Prostate gland (tissue), 2 donors: ENCODE measurements at regions of chr18 and their contacts with region 1.

Region 1: DNA sequence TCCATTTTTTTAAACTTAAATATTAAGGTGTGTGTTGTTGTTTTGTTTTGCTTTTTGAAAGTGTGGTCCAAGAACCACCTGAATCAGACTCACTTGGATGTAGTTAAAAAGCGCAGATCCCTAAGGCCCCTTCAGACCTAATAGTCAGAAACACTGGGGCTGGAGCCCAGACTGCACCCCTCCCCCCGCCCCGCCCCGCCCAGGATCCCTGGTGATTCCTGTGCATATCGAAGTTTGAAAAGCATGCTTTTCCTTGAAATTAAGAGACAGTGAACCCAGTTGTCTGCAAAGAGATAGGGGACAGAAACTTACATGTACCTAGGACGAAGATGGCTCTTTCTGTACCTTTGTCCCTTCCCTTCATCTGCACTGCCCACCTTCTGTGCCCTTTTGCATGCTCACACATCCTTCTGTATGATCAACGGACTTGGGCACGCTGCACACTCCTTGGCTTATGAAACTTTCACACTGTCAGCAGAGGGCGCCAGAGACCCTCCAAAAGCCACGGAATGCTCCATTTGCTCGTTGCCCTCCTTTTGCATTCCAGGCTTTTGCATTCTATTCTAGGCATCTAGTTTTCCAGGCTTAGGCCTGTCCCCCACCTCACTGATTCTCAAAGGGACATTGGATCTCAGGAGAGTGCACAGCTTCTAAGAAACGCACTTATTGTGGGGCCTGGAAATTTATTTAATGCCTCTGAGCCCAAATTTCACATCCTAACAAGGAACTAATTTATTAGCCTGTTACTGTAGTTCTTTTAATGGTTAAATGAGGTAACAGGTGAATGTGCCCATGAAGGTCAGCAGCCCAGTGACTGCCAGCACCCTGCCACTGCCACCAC is 32.8 kb upstream of the SLC14A1 start:
- DNase-seq: peak; percentile 78
- H3K4me3 ChIP-seq: no peak overlapping the region
- H3K27ac ChIP-seq: no peak overlapping the region
- H3K4me1 ChIP-seq: no peaks in the 10 kb centered on the region
- H3K27me3 ChIP-seq: no peaks in the 10 kb centered on the region
- CTCF ChIP-seq: peak; percentile 45 to 91 (median 84)
- POLR2A ChIP-seq: no peak

Region 2: GRCh38 chr18:45291621-45292615 is 399.3 kb before region 1 on chr18:
- intact Hi-C with region 1: no loop called
- DNase-seq: no peak
- H3K4me3 ChIP-seq: no peak overlapping the region
- H3K27ac ChIP-seq: no peak overlapping the region
- H3K4me1 ChIP-seq: no peaks in the 10 kb centered on the region
- H3K27me3 ChIP-seq: no peaks in the 10 kb centered on the region
- CTCF ChIP-seq: no peak
- POLR2A ChIP-seq: no peak

Region 3: GRCh38 chr18:45488645-45489044 is 202.6 kb before region 1 on chr18:
- intact Hi-C with region 1: no loop called
- DNase-seq: no peak
- H3K4me3 ChIP-seq: no peak overlapping the region
- H3K27ac ChIP-seq: no peak overlapping the region
- H3K4me1 ChIP-seq: no peaks in the 10 kb centered on the region
- H3K27me3 ChIP-seq: no peaks in the 10 kb centered on the region
- CTCF ChIP-seq: no peak
- POLR2A ChIP-seq: no peak

Region 4: DNA sequence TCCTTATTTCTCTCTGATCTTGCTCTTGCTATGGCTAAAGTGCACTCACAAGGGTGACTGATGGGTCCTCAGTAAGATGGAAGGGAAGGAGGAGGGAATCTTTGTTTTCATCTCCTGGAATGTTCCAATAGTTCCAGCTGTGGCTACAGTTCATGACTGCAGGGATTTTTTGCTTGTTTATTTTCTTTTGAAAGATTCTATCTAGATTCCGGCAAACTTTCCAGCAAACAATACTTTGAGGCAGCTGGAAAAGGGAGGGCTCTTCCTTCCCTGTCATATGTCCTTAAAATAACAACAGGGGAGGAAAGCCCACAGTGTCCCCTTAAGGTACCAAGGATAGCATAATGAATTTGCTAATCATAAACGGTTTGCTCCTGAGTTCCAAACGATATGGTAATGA is 187.2 kb before region 1 on chr18:
- intact Hi-C with region 1: no loop called
- DNase-seq: no peak
- H3K4me3 ChIP-seq: no peak overlapping the region
- H3K27ac ChIP-seq: peak overlapping the region in 1 of 2 donors; percentile 19
- H3K4me1 ChIP-seq: no peaks in the 10 kb centered on the region
- H3K27me3 ChIP-seq: no peaks in the 10 kb centered on the region
- CTCF ChIP-seq: no peak
- POLR2A ChIP-seq: no peak

Region 5: GRCh38 chr18:45879681-45880655 is 188.8 kb after region 1 on chr18:
- intact Hi-C with region 1: loop called (anchors 5 kb)
- DNase-seq: peak; percentile 73
- H3K4me3 ChIP-seq: no peak overlapping the region
- H3K27ac ChIP-seq: peak overlapping the region; percentile 11 to 20
- H3K4me1 ChIP-seq: no peaks in the 10 kb centered on the region
- H3K27me3 ChIP-seq: no peaks in the 10 kb centered on the region
- CTCF ChIP-seq: peak; percentile 97 to 98 (median 97)
- POLR2A ChIP-seq: no peak